WTC11 (cell line): ENCODE measurements at regions of chr12 and their contacts with region 1.

Region 1: GRCh38 chr12:49945394-49946080 is 5.0 kb upstream of the AQP2 start:
- DNase-seq: peak; percentile 90
- ATAC-seq: peak; percentile 95
- H3K4me3 Mint-ChIP-seq: peak overlapping the region; percentile 61
- H3K27ac Mint-ChIP-seq: 0 out of 2 replicates have a peak overlapping the region, but pooled peaks have one; percentile 18
- H3K4me1 Mint-ChIP-seq: peaks cover 40% of the 10 kb centered on the region
- H3K27me3 Mint-ChIP-seq: peaks cover 9% of the 10 kb centered on the region; the same call in 1 of the 2 replicates
- CTCF ChIP-seq: peak; percentile 69

Region 2: GRCh38 chr12:49651855-49652254 is 293.7 kb before region 1 on chr12:
- CTCF ChIA-PET with region 1: no interaction called
- POLR2A ChIA-PET with region 1: no interaction called
- DNase-seq: no peak
- ATAC-seq: peak; percentile 64
- H3K4me3 Mint-ChIP-seq: no peak overlapping the region
- H3K27ac Mint-ChIP-seq: no peak overlapping the region
- H3K4me1 Mint-ChIP-seq: peaks cover 13% of the 10 kb centered on the region
- H3K27me3 Mint-ChIP-seq: no peaks in the 10 kb centered on the region
- CTCF ChIP-seq: no peak

Region 3: GRCh38 chr12:49866859-49867579 is 78.5 kb before region 1 on chr12:
- CTCF ChIA-PET with region 1: interaction called, 71 read pairs
- POLR2A ChIA-PET with region 1: no interaction called
- DNase-seq: peak; percentile 90
- ATAC-seq: peak; percentile 94
- H3K4me3 Mint-ChIP-seq: no peak overlapping the region
- H3K27ac Mint-ChIP-seq: no peak overlapping the region
- H3K4me1 Mint-ChIP-seq: peaks cover 9% of the 10 kb centered on the region
- H3K27me3 Mint-ChIP-seq: peaks cover 10% of the 10 kb centered on the region
- CTCF ChIP-seq: peak; percentile 96

Region 4: GRCh38 chr12:49893753-49894752 is 51.5 kb before region 1 on chr12:
- CTCF ChIA-PET with region 1: interaction called, 22 read pairs
- POLR2A ChIA-PET with region 1: no interaction called
- DNase-seq: no peak
- ATAC-seq: peak; percentile 19
- H3K4me3 Mint-ChIP-seq: no peak overlapping the region
- H3K27ac Mint-ChIP-seq: no peak overlapping the region
- H3K4me1 Mint-ChIP-seq: peaks cover 12% of the 10 kb centered on the region
- H3K27me3 Mint-ChIP-seq: peaks cover 7% of the 10 kb centered on the region; the same call in 1 of the 2 replicates
- CTCF ChIP-seq: no peak

Region 5: GRCh38 chr12:49917166-49917787 is 28.3 kb before region 1 on chr12:
- CTCF ChIA-PET with region 1: interaction called, 12 read pairs
- POLR2A ChIA-PET with region 1: no interaction called
- DNase-seq: no peak
- ATAC-seq: no peak
- H3K4me3 Mint-ChIP-seq: no peak overlapping the region
- H3K27ac Mint-ChIP-seq: peak overlapping the region; percentile 29; the same call in 1 of the 2 replicates
- H3K4me1 Mint-ChIP-seq: peaks cover 6% of the 10 kb centered on the region
- H3K27me3 Mint-ChIP-seq: no peaks in the 10 kb centered on the region; the same call in 1 of the 2 replicates
- CTCF ChIP-seq: no peak

Region 6: GRCh38 chr12:49974231-49974675 is 28.7 kb after region 1 on chr12:
- CTCF ChIA-PET with region 1: interaction called, 168 read pairs
- POLR2A ChIA-PET with region 1: no interaction called
- DNase-seq: no peak
- ATAC-seq: peak; percentile 71
- H3K4me3 Mint-ChIP-seq: no peak overlapping the region
- H3K27ac Mint-ChIP-seq: no peak overlapping the region
- H3K4me1 Mint-ChIP-seq: peaks cover 13% of the 10 kb centered on the region
- H3K27me3 Mint-ChIP-seq: no peaks in the 10 kb centered on the region
- CTCF ChIP-seq: no peak

Region 7: DNA sequence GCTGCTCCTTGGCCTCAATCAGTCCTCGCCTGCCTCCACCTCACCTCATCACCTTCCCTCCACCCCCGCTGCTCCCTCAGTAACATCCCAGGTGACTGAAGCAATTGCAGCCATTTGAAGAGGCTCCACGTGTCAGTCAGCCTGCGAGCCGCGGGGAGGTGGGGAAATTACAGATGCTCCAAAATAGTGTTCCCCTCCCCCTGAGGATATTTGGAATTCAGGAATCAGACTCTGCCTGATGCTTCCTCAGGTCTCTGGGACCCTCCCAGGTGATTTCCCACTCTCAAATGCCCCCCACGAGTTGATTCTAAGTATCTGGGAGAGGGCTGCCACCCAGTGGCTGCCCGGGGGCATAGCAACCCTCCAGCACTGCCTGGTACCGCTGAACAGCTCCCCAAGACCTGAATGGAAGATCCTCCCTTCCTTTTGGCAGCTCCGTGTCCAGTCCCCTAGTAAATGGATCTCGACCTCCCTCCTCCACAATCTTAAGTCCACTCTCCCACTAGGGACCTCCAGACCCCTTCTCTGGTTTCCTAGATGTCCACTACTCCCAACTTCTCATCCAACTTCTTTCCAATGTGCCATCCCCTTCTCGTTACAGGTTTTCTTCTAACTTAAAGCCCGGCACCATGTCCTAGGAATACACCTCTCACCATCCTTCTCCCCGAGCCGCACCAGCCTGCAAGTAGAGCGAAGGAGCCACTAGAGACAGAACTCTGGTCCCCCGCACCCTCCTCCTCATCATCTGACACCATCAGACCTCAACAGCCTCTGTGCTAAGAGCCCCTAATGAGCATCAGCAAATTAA is 110.5 kb after region 1 on chr12:
- CTCF ChIA-PET with region 1: interaction called, 15 read pairs
- POLR2A ChIA-PET with region 1: no interaction called
- DNase-seq: peak; percentile 72
- ATAC-seq: peak; percentile 46
- H3K4me3 Mint-ChIP-seq: peak overlapping the region; percentile 79
- H3K27ac Mint-ChIP-seq: no peak overlapping the region
- H3K4me1 Mint-ChIP-seq: peaks cover 25% of the 10 kb centered on the region
- H3K27me3 Mint-ChIP-seq: peaks cover 95% of the 10 kb centered on the region
- CTCF ChIP-seq: peak; percentile 94